Panc1 (cell line): ENCODE measurements at regions of chr4 and their contacts with region 1.

Region 1: DNA sequence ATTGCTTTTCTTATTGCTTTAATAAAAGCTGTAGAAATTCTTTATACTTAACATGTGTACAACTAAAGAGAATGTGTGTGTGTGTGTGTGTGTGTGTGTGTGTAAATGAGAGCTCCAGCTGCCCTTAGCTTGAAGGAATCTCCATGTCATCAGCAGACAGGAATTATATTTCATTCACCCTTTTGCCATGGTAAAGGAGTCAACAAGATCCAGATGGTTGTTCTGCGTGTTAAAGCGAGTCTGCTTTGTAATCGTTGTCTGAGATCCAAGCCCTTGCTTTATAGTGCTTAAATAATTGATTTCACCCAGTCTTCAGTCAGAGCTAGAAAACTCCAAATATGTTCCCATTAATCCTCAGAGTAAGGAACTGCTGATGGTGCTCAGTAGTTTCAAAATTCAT is 285.5 kb downstream of the PDGFC start:
- DNase-seq: no peak
- ATAC-seq: no peak
- H3K4me3 ChIP-seq: no peak overlapping the region
- H3K27ac ChIP-seq: no peak overlapping the region
- H3K4me1 ChIP-seq: no peaks in the 10 kb centered on the region
- H3K27me3 ChIP-seq: no peaks in the 10 kb centered on the region
- CTCF ChIP-seq: no peak

Region 2: DNA sequence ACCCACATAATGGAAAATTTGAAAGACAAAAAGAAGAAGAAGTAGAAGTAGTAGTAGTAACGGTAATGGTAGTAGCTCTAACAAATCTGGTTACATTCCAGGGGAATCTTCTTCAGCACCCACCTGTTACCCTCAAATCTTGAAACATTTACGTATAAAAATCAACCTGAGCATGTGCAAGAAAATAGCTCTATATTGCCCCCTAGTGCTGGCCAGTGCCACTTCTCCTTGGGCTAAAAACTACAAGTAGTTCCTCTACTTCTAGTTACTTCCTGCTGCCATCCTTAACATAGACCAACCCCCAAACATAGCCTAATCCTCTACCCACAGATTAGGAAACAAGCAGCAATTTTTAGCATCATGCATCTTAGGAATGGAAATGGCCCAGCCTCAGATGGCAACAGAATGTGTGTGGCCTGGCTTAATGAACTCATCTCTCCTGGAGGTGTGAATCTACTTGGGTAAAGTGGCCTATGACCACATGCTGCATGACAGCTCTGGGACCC is 282.4 kb after region 1 on chr4:
- CTCF ChIA-PET with region 1: no interaction called
- POLR2A ChIA-PET with region 1: no interaction called
- in situ Hi-C with region 1: no loop called
- intact Hi-C with region 1: loop called (anchors 10 kb)
- DNase-seq: no peak
- ATAC-seq: peak; percentile 51; the same call in 1 of the 2 replicates
- H3K4me3 ChIP-seq: peak overlapping the region; percentile 68 to 93
- H3K27ac ChIP-seq: peak overlapping the region; percentile 65; the same call in 1 of the 2 replicates
- H3K4me1 ChIP-seq: peaks cover 29% of the 10 kb centered on the region
- H3K27me3 ChIP-seq: no peaks in the 10 kb centered on the region
- CTCF ChIP-seq: peak; percentile 76